HepG2 (cell line): ENCODE measurements at regions of chr11 and their contacts with region 1.

Region 1: DNA sequence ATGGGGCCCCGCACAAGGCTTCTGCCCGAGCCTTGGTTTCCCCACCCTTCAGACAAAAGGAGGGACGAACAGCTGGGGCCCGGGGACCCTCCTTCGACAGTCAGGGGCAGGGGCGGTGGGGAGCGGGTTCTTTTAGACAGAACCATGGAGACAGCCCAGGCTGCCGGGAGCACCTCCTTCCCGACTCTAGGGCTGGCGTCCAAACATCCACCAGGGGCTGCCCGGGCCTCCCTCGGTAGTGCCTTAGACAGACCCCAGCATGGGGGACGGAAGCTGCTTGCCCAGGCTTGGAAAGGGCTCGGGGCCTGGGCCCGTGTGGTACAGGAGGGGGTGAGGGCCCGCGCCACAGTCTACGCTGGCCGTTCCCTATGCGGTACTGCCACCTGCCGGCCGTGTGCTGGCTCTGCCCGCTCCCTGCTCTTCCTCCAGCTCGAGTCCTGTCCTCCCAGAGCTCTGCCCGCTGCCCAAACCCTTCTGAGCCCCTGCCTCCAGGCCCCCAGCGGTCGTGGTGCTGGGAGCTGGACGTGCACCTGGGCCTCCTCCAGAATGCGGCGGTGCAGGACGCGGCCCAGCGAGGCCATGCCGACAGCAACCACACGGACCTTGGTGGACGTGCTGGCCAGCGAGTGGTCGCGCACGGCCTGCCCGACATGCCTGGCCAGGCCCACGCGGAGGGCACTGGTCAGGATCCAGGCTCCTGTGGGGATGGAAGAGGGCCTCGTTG is 20.1 kb downstream of the TSSC4 start:
- DNase-seq: peak; percentile 56
- ATAC-seq: peak; percentile 94
- H3K4me3 ChIP-seq: peak overlapping the region in 2 of 3 experiments; percentile 36 to 53; a peak in 2 of 6 replicates
- H3K27ac ChIP-seq: no peak overlapping the region
- H3K4me1 ChIP-seq: peaks cover 16% of the 10 kb centered on the region; the same call in 1 of the 2 replicates
- H3K27me3 ChIP-seq: peaks cover 11 to 37% of the 10 kb centered on the region in 2 experiments
- CTCF ChIP-seq: peak; percentile 99
- EP300 ChIP-seq: no peak
- POLR2A ChIP-seq: no peak
- RAD21 ChIP-seq: peak; percentile 96

Region 2: DNA sequence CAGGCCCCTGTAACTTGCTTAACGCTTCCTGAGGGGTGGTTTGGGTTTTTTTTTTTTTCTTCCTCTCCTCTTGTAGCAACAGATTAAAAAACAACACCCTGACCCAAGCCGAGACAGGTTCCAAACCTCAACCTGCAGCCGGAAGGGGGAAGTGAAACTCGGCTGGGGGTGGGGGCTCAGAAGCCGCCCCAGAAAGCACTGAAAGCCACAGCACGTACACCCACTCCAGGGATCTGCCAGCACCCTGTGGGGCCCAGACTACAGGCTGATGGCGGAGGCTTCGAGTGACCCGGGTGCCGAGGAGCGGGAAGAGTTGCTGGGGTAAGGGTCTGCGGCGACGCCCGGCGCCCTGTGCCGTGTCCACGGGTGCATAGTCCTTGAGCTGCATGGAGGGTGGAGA is 567.8 kb before region 1 on chr11 and contains the start of gene LSP1:
- CTCF ChIA-PET with region 1: no interaction called
- POLR2A ChIA-PET with region 1: no interaction called
- in situ Hi-C with region 1: no loop called
- intact Hi-C with region 1: no loop called
- DNase-seq: no peak
- ATAC-seq: no peak
- H3K4me3 ChIP-seq: no peak within 1 kb of the TSS
- H3K27ac ChIP-seq: no peak within 1 kb of the TSS
- H3K4me1 ChIP-seq: no peaks in the 10 kb centered on the region
- H3K27me3 ChIP-seq: peaks cover 31 to 87% of the 10 kb centered on the region in 2 experiments
- CTCF ChIP-seq: no peak
- EP300 ChIP-seq: no peak
- POLR2A ChIP-seq: no peak
- RAD21 ChIP-seq: no peak
- total RNA-seq, gene LSP1: 0.29 and 1.00 TPM in 2 replicates

Region 3: DNA sequence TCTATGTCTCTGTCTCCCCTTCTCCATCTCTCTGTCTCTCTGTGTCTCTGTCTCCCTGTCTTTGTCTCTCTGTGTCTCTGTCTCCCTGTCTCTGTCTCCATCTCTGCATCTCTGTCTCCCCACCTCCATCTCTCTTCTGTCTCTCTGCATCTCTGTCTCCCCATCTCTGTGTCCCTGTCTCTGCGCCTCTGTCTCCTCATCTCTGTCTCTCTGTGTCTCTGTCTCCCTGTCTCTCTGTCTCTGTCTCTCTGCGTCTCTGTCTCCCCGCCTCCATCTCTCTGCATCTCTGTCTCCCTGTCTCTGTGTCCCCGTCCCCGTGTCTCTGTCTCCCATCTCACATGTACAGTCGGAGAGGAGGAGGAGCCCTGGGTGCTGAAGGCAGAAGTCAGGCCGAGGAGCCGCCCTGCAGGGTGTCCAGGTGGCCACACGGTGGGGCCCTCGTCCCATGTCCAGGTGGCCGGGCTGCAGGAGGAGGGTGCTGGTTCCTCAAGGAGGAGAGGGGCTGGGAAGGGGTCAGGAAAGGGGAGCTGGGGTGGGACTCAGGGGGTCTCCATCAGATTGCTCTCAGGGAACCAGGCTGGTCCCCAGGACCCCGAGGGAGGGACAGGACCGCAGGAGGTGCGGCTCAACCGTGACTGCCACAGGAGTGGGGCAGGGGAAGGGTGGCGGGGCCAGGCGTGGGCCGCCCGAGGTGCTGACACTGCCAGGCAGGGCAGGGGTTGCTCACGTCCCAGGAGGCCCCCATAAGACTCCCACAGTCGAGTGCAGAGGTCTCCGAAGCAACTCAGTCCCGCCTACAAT is 223.5 kb before region 1 on chr11:
- CTCF ChIA-PET with region 1: interaction called, 4 read pairs
- POLR2A ChIA-PET with region 1: no interaction called
- in situ Hi-C with region 1: loop called (anchors 5 kb)
- intact Hi-C with region 1: loop called (anchors 5 kb)
- DNase-seq: peak; percentile 55
- ATAC-seq: peak; percentile 80
- H3K4me3 ChIP-seq: no peak overlapping the region
- H3K27ac ChIP-seq: no peak overlapping the region
- H3K4me1 ChIP-seq: peaks cover 48% of the 10 kb centered on the region
- H3K27me3 ChIP-seq: peaks cover 7 to 16% of the 10 kb centered on the region in 2 experiments; a peak in 4 of 5 replicates
- CTCF ChIP-seq: peak; percentile 100
- EP300 ChIP-seq: no peak
- POLR2A ChIP-seq: no peak
- RAD21 ChIP-seq: peak; percentile 96

Region 4: GRCh38 chr11:2202055-2202899 is 218.4 kb before region 1 on chr11:
- CTCF ChIA-PET with region 1: interaction called, 4 read pairs
- POLR2A ChIA-PET with region 1: no interaction called
- in situ Hi-C with region 1: loop called (anchors 5 kb)
- intact Hi-C with region 1: loop called (anchors 5 kb)
- DNase-seq: no peak
- ATAC-seq: no peak
- H3K4me3 ChIP-seq: no peak overlapping the region
- H3K27ac ChIP-seq: no peak overlapping the region
- H3K4me1 ChIP-seq: peaks cover 78% of the 10 kb centered on the region
- H3K27me3 ChIP-seq: no peaks in the 10 kb centered on the region
- CTCF ChIP-seq: no peak
- EP300 ChIP-seq: no peak
- POLR2A ChIP-seq: no peak
- RAD21 ChIP-seq: no peak

Region 5: DNA sequence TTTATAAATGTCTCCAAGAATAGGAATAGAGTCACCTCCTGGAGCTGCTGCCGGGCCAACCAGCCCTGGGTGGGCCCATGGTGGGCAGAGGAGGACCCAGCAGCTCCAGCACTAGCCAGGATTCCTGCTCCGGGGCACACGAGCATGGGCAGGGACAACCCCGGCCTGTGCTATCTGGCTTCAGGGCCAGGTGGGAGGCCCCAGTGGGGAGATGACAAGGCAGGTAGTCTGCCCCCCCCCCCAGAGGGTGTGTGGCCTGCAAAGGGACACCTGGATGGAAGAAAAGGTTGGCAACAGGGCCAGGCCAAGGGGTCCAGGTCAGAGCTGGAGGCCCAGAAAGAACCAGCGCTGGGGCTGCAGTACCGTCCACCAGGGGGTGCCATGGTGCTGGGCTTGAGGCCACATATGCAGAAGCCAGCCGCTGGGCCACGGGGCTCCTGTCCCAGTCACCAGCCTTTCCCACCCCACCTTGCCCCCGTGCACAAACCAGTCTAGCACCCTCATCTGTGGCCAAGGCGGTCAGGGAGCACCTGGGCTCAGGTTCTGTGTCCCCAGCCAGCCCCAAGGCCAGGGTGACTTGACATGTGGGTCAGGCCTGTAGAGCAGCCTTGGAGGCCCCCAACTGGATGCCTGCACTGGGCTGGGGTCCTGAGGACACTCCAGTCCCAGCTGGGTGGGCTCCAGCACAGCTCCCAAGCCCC is 115.4 kb before region 1 on chr11:
- CTCF ChIA-PET with region 1: interaction called, 87 read pairs
- POLR2A ChIA-PET with region 1: interaction called, 8 read pairs
- in situ Hi-C with region 1: loop called (anchors 5 kb)
- intact Hi-C with region 1: no loop called
- DNase-seq: peak; percentile 40
- ATAC-seq: peak; percentile 83
- H3K4me3 ChIP-seq: no peak overlapping the region
- H3K27ac ChIP-seq: no peak overlapping the region
- H3K4me1 ChIP-seq: peaks cover 24% of the 10 kb centered on the region
- H3K27me3 ChIP-seq: peaks cover 2 to 9% of the 10 kb centered on the region in 2 experiments; a peak in 3 of 5 replicates
- CTCF ChIP-seq: peak; percentile 93
- EP300 ChIP-seq: no peak
- POLR2A ChIP-seq: no peak
- RAD21 ChIP-seq: peak; percentile 93

Region 6: DNA sequence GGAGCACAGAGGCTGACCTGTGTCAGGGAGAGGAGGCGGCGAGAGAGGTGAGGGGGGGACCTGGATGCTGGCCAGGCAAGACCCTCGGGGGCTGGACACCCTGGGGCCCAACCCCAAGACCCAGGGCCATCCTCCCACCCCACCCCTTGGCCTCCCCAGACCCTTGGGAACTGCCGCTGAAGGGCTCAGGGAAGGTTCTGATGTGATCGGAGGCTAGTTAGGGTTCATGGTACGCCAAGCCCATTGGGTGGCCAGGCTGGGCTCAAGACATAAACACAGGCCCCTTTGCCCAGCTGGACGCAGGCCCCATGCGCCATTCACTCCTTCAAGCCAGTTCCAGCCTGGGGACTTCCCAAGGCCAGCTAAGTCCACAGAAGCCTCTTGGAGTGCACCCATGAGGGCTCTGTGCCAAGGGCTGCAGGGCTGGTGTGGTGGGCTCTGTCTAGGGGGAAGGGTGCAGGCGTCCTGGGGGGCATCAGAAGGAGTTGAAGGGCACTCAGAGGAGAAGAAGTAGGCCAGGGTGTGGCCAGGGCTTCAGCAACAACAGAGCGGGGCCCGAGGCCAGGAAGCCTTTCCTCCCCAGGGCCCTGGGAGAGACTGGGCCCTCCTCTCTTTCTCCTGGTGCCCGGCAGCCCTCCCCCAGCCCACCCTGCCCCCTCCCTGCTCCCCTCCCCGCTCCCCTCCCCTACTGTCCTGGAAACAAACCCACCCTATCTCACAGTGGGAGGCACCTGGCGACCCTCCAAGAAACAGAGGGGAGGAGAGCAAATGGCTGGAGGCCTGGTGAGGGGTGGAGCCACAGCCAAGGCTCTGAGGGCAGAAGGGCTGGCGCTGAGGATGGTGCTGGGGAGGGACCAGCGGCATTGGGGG is 105.9 kb before region 1 on chr11:
- CTCF ChIA-PET with region 1: no interaction called
- POLR2A ChIA-PET with region 1: interaction called, 3 read pairs
- in situ Hi-C with region 1: loop called (anchors 5 kb)
- intact Hi-C with region 1: no loop called
- DNase-seq: no peak
- ATAC-seq: no peak
- H3K4me3 ChIP-seq: no peak overlapping the region
- H3K27ac ChIP-seq: no peak overlapping the region
- H3K4me1 ChIP-seq: no peaks in the 10 kb centered on the region
- H3K27me3 ChIP-seq: peaks cover 14 to 37% of the 10 kb centered on the region in 2 experiments; a peak in 3 of 5 replicates
- CTCF ChIP-seq: no peak
- EP300 ChIP-seq: no peak
- POLR2A ChIP-seq: no peak
- RAD21 ChIP-seq: no peak

Region 7: GRCh38 chr11:2400069-2400760 is 20.4 kb before region 1 on chr11 and contains the start of gene TSSC4:
- CTCF ChIA-PET with region 1: interaction called, 55 read pairs
- POLR2A ChIA-PET with region 1: interaction called, 31 read pairs
- in situ Hi-C with region 1: no loop called
- intact Hi-C with region 1: loop called (anchors 1 kb)
- DNase-seq: peak; percentile 99
- ATAC-seq: peak; percentile 91
- H3K4me3 ChIP-seq: peak within 1 kb of the TSS; percentile 80 to 99 (median 96)
- H3K27ac ChIP-seq: peak within 1 kb of the TSS; percentile 78
- H3K4me1 ChIP-seq: peaks cover 24% of the 10 kb centered on the region
- H3K27me3 ChIP-seq: peaks cover 0 to 3% of the 10 kb centered on the region in 2 experiments; a peak in 2 of 5 replicates
- CTCF ChIP-seq: peak; percentile 100
- EP300 ChIP-seq: peak in 1 of 2 experiments; percentile 34; a peak in 2 of 4 replicates
- POLR2A ChIP-seq: peak in 1 of 2 experiments; percentile 75; a peak in 1 of 4 replicates
- RAD21 ChIP-seq: peak; percentile 97
- total RNA-seq, gene TSSC4: 51.5 and 58.6 TPM in 2 replicates

Region 8: DNA sequence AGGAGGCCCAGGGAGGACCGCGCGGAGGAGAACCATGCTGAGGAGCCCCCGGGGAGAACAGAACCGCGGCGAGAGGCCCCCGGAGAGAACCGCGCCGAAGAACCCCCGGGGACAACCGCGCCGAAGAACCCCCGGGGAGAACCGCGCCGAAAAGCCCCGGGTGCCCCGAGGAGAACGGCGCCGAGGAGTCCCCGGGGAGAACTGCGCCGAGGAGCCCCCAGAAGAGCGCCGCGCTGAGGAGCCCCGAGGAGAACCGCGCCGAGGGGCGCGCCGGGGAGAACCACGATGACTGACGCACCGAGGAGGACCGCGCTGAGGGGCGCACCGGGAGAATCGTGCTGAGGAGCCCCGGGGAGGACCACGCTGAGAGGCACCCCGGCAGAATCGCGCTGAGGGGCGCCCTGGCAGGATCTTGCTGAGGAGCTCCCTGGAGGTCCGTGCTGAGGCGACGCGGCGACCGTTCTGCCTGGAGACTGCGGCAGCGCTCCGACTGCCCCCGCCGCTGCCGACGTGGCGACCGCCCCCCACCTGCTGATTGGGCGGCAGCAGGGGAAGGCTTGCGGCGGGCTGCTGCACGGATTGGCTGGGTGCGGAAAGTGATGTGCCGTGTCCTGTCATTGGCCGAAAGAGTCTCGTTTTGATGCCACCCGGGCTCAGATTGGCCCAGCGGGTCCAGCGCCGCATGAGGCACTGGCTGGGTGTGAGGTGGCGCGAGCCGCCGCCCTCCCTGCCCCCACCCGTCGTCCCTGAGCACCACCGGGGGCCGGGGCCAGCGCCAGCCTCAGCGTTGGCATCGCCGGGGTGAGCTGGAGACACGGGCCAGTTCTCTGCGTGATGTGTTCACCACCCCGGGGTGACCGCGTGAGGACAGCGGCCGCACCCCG is 279.1 kb after region 1 on chr11 and contains the start of gene KCNQ1OT1:
- CTCF ChIA-PET with region 1: no interaction called
- POLR2A ChIA-PET with region 1: no interaction called
- in situ Hi-C with region 1: loop called (anchors 10 kb)
- intact Hi-C with region 1: no loop called
- DNase-seq: peak; percentile 95
- ATAC-seq: peak; percentile 90
- H3K4me3 ChIP-seq: peak within 1 kb of the TSS; percentile 95
- H3K27ac ChIP-seq: peak within 1 kb of the TSS; percentile 95
- H3K4me1 ChIP-seq: peaks cover 57% of the 10 kb centered on the region
- H3K27me3 ChIP-seq: peaks cover 0 to 3% of the 10 kb centered on the region in 2 experiments; a peak in 2 of 5 replicates
- CTCF ChIP-seq: peak; percentile 35; the same call in 1 of the 2 replicates
- EP300 ChIP-seq: peak in 1 of 2 experiments; percentile 4; a peak in 1 of 4 replicates
- POLR2A ChIP-seq: peak in 1 of 2 experiments; percentile 99; a peak in 2 of 4 replicates
- RAD21 ChIP-seq: peak; percentile 46; the same call in 1 of the 2 replicates
- total RNA-seq, gene KCNQ1OT1: 2.5 and 18.9 TPM in 2 replicates